ENCODE measurements at regions of chr22 and their contacts with region 1.

Region 1: GRCh38 chr22:22201185-22201929 is 43.2 kb upstream of the VPREB1 start:
- DNase-seq: peak; percentile 58
- ATAC-seq: peak; percentile 65
- H3K4me3 Mint-ChIP-seq: no peak overlapping the region
- H3K27ac Mint-ChIP-seq: peak overlapping the region; percentile 80
- H3K4me1 Mint-ChIP-seq: peaks cover 63% of the 10 kb centered on the region
- H3K27me3 Mint-ChIP-seq: no peaks in the 10 kb centered on the region
- CTCF ChIP-seq: no peak

Region 2: GRCh38 chr22:22161924-22162851 is 39.2 kb before region 1 on chr22:
- CTCF ChIA-PET with region 1: interaction called, 42 read pairs
- POLR2A ChIA-PET with region 1: interaction called, 73 read pairs
- intact Hi-C with region 1: no loop called
- DNase-seq: peak; percentile 47
- ATAC-seq: peak; percentile 92
- H3K4me3 Mint-ChIP-seq: peak overlapping the region; percentile 85
- H3K27ac Mint-ChIP-seq: peak overlapping the region; percentile 97
- H3K4me1 Mint-ChIP-seq: peaks cover 83% of the 10 kb centered on the region
- H3K27me3 Mint-ChIP-seq: no peaks in the 10 kb centered on the region
- CTCF ChIP-seq: no peak

Region 3: GRCh38 chr22:22168190-22168940 is 33.0 kb before region 1 on chr22:
- CTCF ChIA-PET with region 1: interaction called, 42 read pairs
- POLR2A ChIA-PET with region 1: interaction called, 73 read pairs
- intact Hi-C with region 1: loop called (anchors 1 kb)
- DNase-seq: peak; percentile 31
- ATAC-seq: peak; percentile 54
- H3K4me3 Mint-ChIP-seq: peak overlapping the region; percentile 84
- H3K27ac Mint-ChIP-seq: peak overlapping the region; percentile 97
- H3K4me1 Mint-ChIP-seq: peaks cover 86% of the 10 kb centered on the region
- H3K27me3 Mint-ChIP-seq: no peaks in the 10 kb centered on the region
- CTCF ChIP-seq: no peak

Region 4: DNA sequence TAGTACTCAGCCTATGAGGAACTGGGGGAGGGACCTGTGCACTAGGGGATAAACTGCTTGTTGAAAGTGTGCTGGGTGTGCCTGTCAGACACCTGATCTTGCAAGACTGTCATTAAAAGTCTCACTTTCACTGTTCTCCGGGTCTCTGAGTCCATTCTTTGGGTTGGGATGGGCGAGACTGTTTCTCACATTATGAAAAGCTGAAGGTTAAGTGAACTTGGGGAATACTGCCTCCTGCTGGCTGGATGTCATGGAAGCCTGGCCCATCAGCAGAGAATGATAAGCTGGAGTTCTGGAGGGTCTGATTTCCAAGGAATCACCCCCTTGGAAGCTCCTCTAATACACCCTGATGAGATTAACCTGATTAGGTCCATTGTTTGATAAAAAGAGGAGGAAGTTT is 34.2 kb after region 1 on chr22:
- CTCF ChIA-PET with region 1: interaction called, 30 read pairs
- POLR2A ChIA-PET with region 1: interaction called, 4 read pairs
- intact Hi-C with region 1: no loop called
- DNase-seq: no peak
- ATAC-seq: no peak
- H3K4me3 Mint-ChIP-seq: peak overlapping the region; percentile 38
- H3K27ac Mint-ChIP-seq: no peak overlapping the region
- H3K4me1 Mint-ChIP-seq: peaks cover 25% of the 10 kb centered on the region
- H3K27me3 Mint-ChIP-seq: peaks cover 2% of the 10 kb centered on the region
- CTCF ChIP-seq: no peak

Measured in activated B cell treated with CpG ODN at 0.5 μM for 24 hours (primary cell).